Naive thymus-derived CD4-positive, alpha-beta T cell (primary cell): ENCODE measurements at regions of chr2 and their contacts with region 1.

Region 1: GRCh38 chr2:24360050-24360962 is at the start of gene ITSN2:
- DNase-seq: peak; percentile 76 to 88 (median 83)
- ATAC-seq: peak; percentile 92
- H3K4me3 ChIP-seq: peak within 1 kb of the TSS; percentile 77
- H3K4me3 Mint-ChIP-seq: peak within 1 kb of the TSS; percentile 88 to 98 (median 92)
- H3K27ac ChIP-seq: peak within 1 kb of the TSS; percentile 99
- H3K27ac Mint-ChIP-seq: peak within 1 kb of the TSS; percentile 91 to 97 (median 95)
- H3K4me1 ChIP-seq: peaks cover 1 to 16% of the 10 kb centered on the region in 2 donors
- H3K4me1 Mint-ChIP-seq: peaks cover 22 to 44% (median 31%) of the 10 kb centered on the region in 7 donors
- H3K27me3 ChIP-seq: no peaks in the 10 kb centered on the region
- H3K27me3 Mint-ChIP-seq: peaks cover 0 to 3% (median 0%) of the 10 kb centered on the region in 5 donors
- total RNA-seq, gene ITSN2: 79.2 to 133 (median 106) TPM

Region 2: GRCh38 chr2:24203029-24203786 is 157.1 kb before region 1 on chr2:
- CTCF ChIA-PET with region 1: no interaction called
- POLR2A ChIA-PET with region 1: no interaction called
- intact Hi-C with region 1: no loop called
- DNase-seq: no peak
- ATAC-seq: no peak
- H3K4me3 ChIP-seq: no peak overlapping the region
- H3K4me3 Mint-ChIP-seq: no peak overlapping the region
- H3K27ac ChIP-seq: no peak overlapping the region
- H3K27ac Mint-ChIP-seq: no peak overlapping the region
- H3K4me1 ChIP-seq: no peaks in the 10 kb centered on the region
- H3K4me1 Mint-ChIP-seq: no peaks in the 10 kb centered on the region
- H3K27me3 ChIP-seq: no peaks in the 10 kb centered on the region
- H3K27me3 Mint-ChIP-seq: no peaks in the 10 kb centered on the region

Region 3: GRCh38 chr2:24304098-24304497 is 56.2 kb before region 1 on chr2:
- CTCF ChIA-PET with region 1: no interaction called
- POLR2A ChIA-PET with region 1: no interaction called
- intact Hi-C with region 1: loop called in 1 of 2 experiments (anchors 10 kb)
- DNase-seq: no peak
- ATAC-seq: no peak
- H3K4me3 ChIP-seq: no peak overlapping the region
- H3K4me3 Mint-ChIP-seq: no peak overlapping the region
- H3K27ac ChIP-seq: no peak overlapping the region
- H3K27ac Mint-ChIP-seq: no peak overlapping the region
- H3K4me1 ChIP-seq: no peaks in the 10 kb centered on the region
- H3K4me1 Mint-ChIP-seq: peaks cover 0 to 4% (median 0%) of the 10 kb centered on the region in 7 donors
- H3K27me3 ChIP-seq: no peaks in the 10 kb centered on the region
- H3K27me3 Mint-ChIP-seq: no peaks in the 10 kb centered on the region

Region 4: DNA sequence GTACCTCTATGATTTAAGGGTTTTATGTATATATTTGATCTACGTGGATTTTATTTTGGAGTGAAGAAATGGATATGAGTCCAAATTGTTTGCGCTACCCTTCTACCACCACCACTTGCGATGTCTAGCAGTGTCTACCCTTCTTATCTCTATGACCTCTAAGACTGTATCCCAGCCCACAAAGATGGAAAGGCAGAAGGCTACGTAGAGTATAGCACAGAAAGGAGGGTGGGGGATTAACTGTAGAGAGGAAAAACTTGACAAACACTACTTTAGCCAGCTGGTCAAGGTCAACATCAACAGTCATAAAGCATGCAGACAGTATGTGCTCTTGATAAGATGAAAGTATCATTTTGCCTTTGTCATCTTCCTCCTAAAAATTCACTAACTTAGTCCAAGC is 14.4 kb before region 1 on chr2:
- CTCF ChIA-PET with region 1: no interaction called
- POLR2A ChIA-PET with region 1: interaction called, 16 read pairs
- intact Hi-C with region 1: loop called in 1 of 2 experiments (anchors 1 kb)
- DNase-seq: no peak
- ATAC-seq: no peak
- H3K4me3 ChIP-seq: no peak overlapping the region
- H3K4me3 Mint-ChIP-seq: peak overlapping the region in 3 of 10 donors; percentile 17 to 22 (median 18)
- H3K27ac ChIP-seq: no peak overlapping the region
- H3K27ac Mint-ChIP-seq: no peak overlapping the region
- H3K4me1 ChIP-seq: peaks cover 26 to 28% of the 10 kb centered on the region in 2 donors
- H3K4me1 Mint-ChIP-seq: peaks cover 20 to 85% (median 74%) of the 10 kb centered on the region in 7 donors
- H3K27me3 ChIP-seq: no peaks in the 10 kb centered on the region
- H3K27me3 Mint-ChIP-seq: no peaks in the 10 kb centered on the region

Region 5: DNA sequence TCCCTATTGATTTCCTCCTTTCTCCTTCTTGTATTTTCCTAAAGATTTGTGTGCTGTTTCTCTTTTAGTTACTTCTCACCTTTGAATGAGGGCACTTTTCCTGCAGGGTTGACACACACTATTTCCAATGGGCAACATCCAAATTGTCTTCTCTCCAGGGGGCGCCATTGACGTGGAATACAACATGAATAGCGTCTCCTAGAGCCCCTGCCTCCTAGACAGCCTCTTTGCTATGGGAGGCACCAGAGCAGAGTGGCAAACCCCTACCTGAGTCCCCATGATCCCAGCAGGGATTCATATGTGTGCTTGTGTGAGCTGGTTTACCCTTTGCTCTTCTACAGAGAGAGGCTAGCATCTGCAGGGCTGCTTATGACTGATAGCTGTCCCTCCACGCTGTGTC is 61.4 kb after region 1 on chr2:
- CTCF ChIA-PET with region 1: no interaction called
- POLR2A ChIA-PET with region 1: no interaction called
- intact Hi-C with region 1: no loop called
- DNase-seq: peak in 7 of 9 donors; percentile 15 to 46 (median 43)
- ATAC-seq: peak; percentile 55
- H3K4me3 ChIP-seq: no peak overlapping the region
- H3K4me3 Mint-ChIP-seq: no peak overlapping the region
- H3K27ac ChIP-seq: no peak overlapping the region
- H3K27ac Mint-ChIP-seq: no peak overlapping the region
- H3K4me1 ChIP-seq: no peaks in the 10 kb centered on the region
- H3K4me1 Mint-ChIP-seq: peaks cover 0 to 4% (median 0%) of the 10 kb centered on the region in 7 donors
- H3K27me3 ChIP-seq: no peaks in the 10 kb centered on the region
- H3K27me3 Mint-ChIP-seq: peaks cover 0 to 3% (median 0%) of the 10 kb centered on the region in 5 donors

Region 6: GRCh38 chr2:24792874-24793760 is 432.8 kb after region 1 on chr2 and contains the starts of genes CENPO and PTRHD1:
- CTCF ChIA-PET with region 1: no interaction called
- POLR2A ChIA-PET with region 1: interaction called, 7 read pairs
- intact Hi-C with region 1: loop called (anchors 1 kb)
- DNase-seq: peak; percentile 93 to 99 (median 97)
- ATAC-seq: peak; percentile 98
- H3K4me3 ChIP-seq: peak within 1 kb of the TSS; percentile 97
- H3K4me3 Mint-ChIP-seq: peak within 1 kb of the TSS; percentile 95 to 100 (median 98)
- H3K27ac ChIP-seq: peak within 1 kb of the TSS; percentile 96
- H3K27ac Mint-ChIP-seq: peak within 1 kb of the TSS; percentile 99 to 100 (median 99)
- H3K4me1 ChIP-seq: peaks cover 6 to 10% of the 10 kb centered on the region in 2 donors
- H3K4me1 Mint-ChIP-seq: peaks cover 5 to 53% (median 20%) of the 10 kb centered on the region in 7 donors
- H3K27me3 ChIP-seq: no peaks in the 10 kb centered on the region
- H3K27me3 Mint-ChIP-seq: no peaks in the 10 kb centered on the region
- total RNA-seq, gene CENPO: 3.6 to 36.6 (median 6.0) TPM
- total RNA-seq, gene PTRHD1: 14.3 to 31.5 (median 17.1) TPM

Region 7: DNA sequence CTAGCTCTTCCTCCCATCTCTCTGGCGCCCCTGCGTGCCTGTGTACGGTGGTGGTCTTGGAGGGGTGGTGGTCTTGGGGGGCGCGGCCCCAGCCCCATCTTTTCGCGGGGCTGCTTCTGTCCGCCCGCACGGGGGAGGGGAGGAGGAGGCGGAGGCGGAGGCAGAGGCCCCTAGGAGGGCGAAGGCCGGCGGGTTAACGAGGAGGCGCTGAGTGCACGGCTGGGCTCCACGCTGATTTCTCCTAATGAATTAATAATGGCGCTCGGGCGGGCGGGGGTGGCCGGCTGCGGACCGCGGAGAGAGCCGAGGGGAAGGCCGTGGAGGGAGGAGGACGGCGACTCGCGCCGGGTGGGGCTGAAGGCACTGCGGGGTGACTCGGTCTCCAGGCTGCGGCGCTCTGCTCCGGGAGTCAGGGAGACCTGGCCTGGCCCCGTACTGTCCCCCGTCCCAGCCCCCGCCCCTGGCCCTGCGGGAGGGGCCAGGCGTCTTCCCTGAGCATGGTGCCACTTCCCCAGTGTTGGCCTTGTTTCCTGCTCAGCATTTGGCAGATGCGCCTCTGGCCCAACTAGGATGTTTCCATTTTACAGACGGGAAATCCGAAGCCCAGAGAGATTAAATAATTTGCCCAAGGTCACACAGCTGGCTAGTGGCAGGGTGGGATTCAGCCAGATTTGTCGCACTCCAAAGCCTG is 1818.6 kb after region 1 on chr2:
- CTCF ChIA-PET with region 1: no interaction called
- POLR2A ChIA-PET with region 1: no interaction called
- intact Hi-C with region 1: no loop called
- DNase-seq: no peak
- ATAC-seq: peak; percentile 64
- H3K4me3 ChIP-seq: peak overlapping the region; percentile 46
- H3K4me3 Mint-ChIP-seq: peak overlapping the region; percentile 13 to 76 (median 62)
- H3K27ac ChIP-seq: peak overlapping the region; percentile 1
- H3K27ac Mint-ChIP-seq: peak overlapping the region in 1 of 9 donors; percentile 67
- H3K4me1 ChIP-seq: peaks cover 0 to 6% of the 10 kb centered on the region in 2 donors
- H3K4me1 Mint-ChIP-seq: peaks cover 12 to 27% (median 18%) of the 10 kb centered on the region in 7 donors
- H3K27me3 ChIP-seq: peaks cover 0 to 5% of the 10 kb centered on the region in 2 donors
- H3K27me3 Mint-ChIP-seq: peaks cover 27 to 61% (median 41%) of the 10 kb centered on the region in 5 donors